HCT116 (cell line): ENCODE measurements at regions of chr17 and their contacts with region 1.

Region 1: GRCh38 chr17:75601057-75602051 is 13.8 kb downstream of the MYO15B start:
- DNase-seq: peak; percentile 96
- ATAC-seq: peak; percentile 89
- H3K4me3 ChIP-seq: peak overlapping the region in 1 of 2 experiments; percentile 30; a peak in 2 of 4 replicates
- H3K27ac ChIP-seq: peak overlapping the region; percentile 2; the same call in 1 of the 2 replicates
- H3K4me1 ChIP-seq: peaks cover 15 to 51% of the 10 kb centered on the region in 2 experiments
- H3K27me3 ChIP-seq: no peaks in the 10 kb centered on the region
- CTCF ChIP-seq: peak; percentile 95 to 100 (median 99); a peak in 5 of 6 replicates
- POLR2A ChIP-seq: no peak
- RAD21 ChIP-seq: peak; percentile 87

Region 2: DNA sequence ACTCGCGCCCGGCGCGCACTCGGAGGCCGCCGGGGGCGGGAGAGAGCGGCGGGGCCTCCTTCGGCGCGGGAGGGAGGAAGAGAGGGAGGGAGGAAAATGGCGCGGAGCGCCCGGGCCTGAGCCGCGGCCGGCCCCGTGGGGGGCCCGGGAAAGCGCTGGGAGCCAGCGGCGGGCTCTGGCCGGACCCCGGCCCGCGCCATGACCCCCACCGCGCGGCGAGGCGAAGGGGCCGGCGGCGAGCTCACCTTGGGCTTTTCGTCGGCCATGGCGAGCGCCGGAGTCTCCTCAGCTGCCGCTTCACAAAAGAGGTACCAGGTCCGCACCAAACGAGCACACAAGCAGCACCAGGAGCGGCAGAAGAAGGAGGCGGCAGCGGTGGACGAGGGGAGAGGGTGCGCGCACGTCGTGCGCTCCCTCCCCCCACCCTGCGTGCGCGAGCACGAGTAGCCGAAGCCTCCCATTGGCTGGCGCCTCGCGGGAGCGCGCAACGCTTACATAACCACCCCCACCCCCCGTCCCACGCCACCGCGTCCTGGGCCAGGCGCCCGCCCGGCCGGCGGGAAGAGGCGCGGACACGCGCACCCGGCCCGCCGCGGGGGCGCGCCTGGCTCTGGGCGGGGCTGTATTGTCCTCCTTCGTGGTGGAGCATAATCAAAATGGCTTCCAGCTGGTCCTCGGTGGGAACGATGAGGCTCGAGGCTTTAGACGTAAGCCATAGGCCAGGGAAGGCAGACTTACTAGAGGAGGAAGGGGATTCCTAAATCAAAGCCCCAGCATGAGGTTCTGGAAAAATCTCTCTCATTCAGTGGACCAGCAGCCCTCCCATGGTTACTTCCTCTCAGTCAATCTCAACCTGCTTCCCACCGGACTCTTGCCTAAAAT is 418.5 kb before region 1 on chr17 and contains the start of gene SUMO2:
- CTCF ChIA-PET with region 1: no interaction called
- POLR2A ChIA-PET with region 1: no interaction called
- RAD21 ChIA-PET with region 1: no interaction called
- intact Hi-C with region 1: no loop called
- DNase-seq: peak; percentile 95
- ATAC-seq: peak; percentile 87
- H3K4me3 ChIP-seq: peak within 1 kb of the TSS; percentile 76 to 89
- H3K27ac ChIP-seq: peak within 1 kb of the TSS; percentile 100
- H3K4me1 ChIP-seq: peaks cover 20 to 33% of the 10 kb centered on the region in 2 experiments
- H3K27me3 ChIP-seq: no peaks in the 10 kb centered on the region
- CTCF ChIP-seq: peak in 1 of 3 experiments; percentile 37; a peak in 2 of 6 replicates
- POLR2A ChIP-seq: peak; percentile 48
- RAD21 ChIP-seq: no peak
- total RNA-seq, gene SUMO2: 859 TPM

Region 3: GRCh38 chr17:75430159-75430974 is 171.0 kb before region 1 on chr17:
- CTCF ChIA-PET with region 1: interaction called, 5 read pairs
- POLR2A ChIA-PET with region 1: no interaction called
- RAD21 ChIA-PET with region 1: interaction called in 1 of 2 experiments, 3 read pairs
- intact Hi-C with region 1: loop called (anchors 5 kb)
- DNase-seq: no peak
- ATAC-seq: peak; percentile 66
- H3K4me3 ChIP-seq: peak overlapping the region in 1 of 2 experiments; percentile 43; a peak in 2 of 4 replicates
- H3K27ac ChIP-seq: peak overlapping the region; percentile 48; the same call in 1 of the 2 replicates
- H3K4me1 ChIP-seq: peaks cover 33 to 46% of the 10 kb centered on the region in 2 experiments
- H3K27me3 ChIP-seq: no peaks in the 10 kb centered on the region
- CTCF ChIP-seq: no peak
- POLR2A ChIP-seq: no peak
- RAD21 ChIP-seq: no peak

Region 4: GRCh38 chr17:75549221-75550138 is 51.9 kb before region 1 on chr17:
- CTCF ChIA-PET with region 1: interaction called, 11 read pairs
- POLR2A ChIA-PET with region 1: no interaction called
- RAD21 ChIA-PET with region 1: no interaction called
- intact Hi-C with region 1: no loop called
- DNase-seq: peak; percentile 63
- ATAC-seq: peak; percentile 94
- H3K4me3 ChIP-seq: peak overlapping the region; percentile 50 to 58
- H3K27ac ChIP-seq: peak overlapping the region; percentile 95
- H3K4me1 ChIP-seq: peaks cover 33 to 39% of the 10 kb centered on the region in 2 experiments
- H3K27me3 ChIP-seq: no peaks in the 10 kb centered on the region
- CTCF ChIP-seq: no peak
- POLR2A ChIP-seq: peak; percentile 76
- RAD21 ChIP-seq: no peak; the same call in 1 of the 2 replicates

Region 5: DNA sequence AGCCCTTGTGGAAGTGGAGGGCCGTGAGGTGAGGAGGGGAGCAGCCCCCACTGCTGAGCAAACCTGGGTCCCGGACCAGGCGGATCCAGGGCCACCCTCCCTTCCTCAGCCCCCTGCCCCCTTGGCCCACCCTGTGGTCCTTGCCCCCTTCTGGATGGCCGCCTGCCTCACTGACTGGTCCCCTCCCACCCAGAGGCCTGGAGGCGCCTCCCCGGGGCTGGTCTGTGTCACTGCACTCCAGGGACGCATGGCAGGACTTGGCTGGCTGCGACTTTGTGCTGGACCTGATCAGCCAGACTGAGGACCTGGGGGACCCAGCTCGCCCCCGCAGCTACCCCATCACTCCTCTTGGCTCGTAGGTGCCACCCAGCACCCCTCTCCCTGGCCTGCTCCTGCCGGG is 12.7 kb after region 1 on chr17:
- CTCF ChIA-PET with region 1: interaction called, 36 read pairs
- POLR2A ChIA-PET with region 1: interaction called, 5 read pairs
- RAD21 ChIA-PET with region 1: interaction called, 3 to 5 read pairs
- intact Hi-C with region 1: no loop called
- DNase-seq: no peak
- ATAC-seq: peak; percentile 77
- H3K4me3 ChIP-seq: no peak overlapping the region
- H3K27ac ChIP-seq: no peak overlapping the region
- H3K4me1 ChIP-seq: peaks cover 24 to 45% of the 10 kb centered on the region in 2 experiments
- H3K27me3 ChIP-seq: no peaks in the 10 kb centered on the region
- CTCF ChIP-seq: peak; percentile 65 to 91 (median 67); a peak in 5 of 6 replicates
- POLR2A ChIP-seq: no peak
- RAD21 ChIP-seq: peak; percentile 86

Region 6: DNA sequence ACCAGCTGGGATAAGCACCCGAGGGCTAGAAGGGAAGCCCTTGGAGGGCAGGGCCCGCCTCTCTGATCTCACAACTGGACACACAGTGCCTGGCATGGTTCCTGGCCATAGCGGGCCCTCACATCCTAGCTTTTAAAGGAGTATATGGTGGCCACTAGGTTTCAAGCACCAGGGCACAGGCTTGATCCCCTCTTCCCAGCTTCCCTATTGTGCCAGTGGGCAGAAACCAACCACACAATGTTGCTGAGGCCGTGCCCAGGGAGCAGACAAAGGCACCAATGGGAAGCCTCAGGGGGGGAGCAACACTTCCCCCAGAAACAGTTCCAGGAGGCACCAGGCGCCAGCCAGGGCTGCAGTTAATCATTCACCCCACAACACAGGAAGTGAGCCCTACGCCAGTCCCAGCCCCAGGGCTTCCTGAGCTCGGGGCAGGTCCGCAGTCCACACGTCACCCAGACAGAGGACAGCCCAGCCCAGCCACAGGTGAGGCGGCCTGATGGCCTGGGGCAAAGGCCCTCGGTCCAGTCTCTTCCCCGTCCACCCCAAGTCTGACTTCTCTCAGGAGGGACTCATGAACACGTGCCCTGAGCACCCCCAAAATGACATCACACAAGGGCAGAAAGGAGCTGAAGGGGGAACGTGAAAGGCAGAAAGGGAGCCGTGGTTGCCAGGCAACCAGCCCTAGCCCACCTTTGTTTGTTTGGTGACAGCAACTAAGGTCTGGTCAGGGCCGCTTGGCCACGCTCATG is 44.7 kb after region 1 on chr17:
- CTCF ChIA-PET with region 1: interaction called, 18 read pairs
- POLR2A ChIA-PET with region 1: no interaction called
- RAD21 ChIA-PET with region 1: no interaction called
- intact Hi-C with region 1: no loop called
- DNase-seq: peak; percentile 64
- ATAC-seq: peak; percentile 89
- H3K4me3 ChIP-seq: peak overlapping the region; percentile 8 to 55
- H3K27ac ChIP-seq: peak overlapping the region; percentile 77
- H3K4me1 ChIP-seq: peaks cover 34 to 60% of the 10 kb centered on the region in 2 experiments
- H3K27me3 ChIP-seq: no peaks in the 10 kb centered on the region
- CTCF ChIP-seq: no peak
- POLR2A ChIP-seq: no peak
- RAD21 ChIP-seq: no peak

Region 7: GRCh38 chr17:75764711-75765421 is 163.5 kb after region 1 on chr17 and contains the start of gene GALK1:
- CTCF ChIA-PET with region 1: interaction called, 15 read pairs
- POLR2A ChIA-PET with region 1: interaction called, 3 read pairs
- RAD21 ChIA-PET with region 1: no interaction called
- intact Hi-C with region 1: no loop called
- DNase-seq: no peak
- ATAC-seq: peak; percentile 85
- H3K4me3 ChIP-seq: peak within 1 kb of the TSS; percentile 84 to 91
- H3K27ac ChIP-seq: peak within 1 kb of the TSS; percentile 78
- H3K4me1 ChIP-seq: peaks cover 13 to 29% of the 10 kb centered on the region in 2 experiments
- H3K27me3 ChIP-seq: no peaks in the 10 kb centered on the region
- CTCF ChIP-seq: peak in 2 of 3 experiments; percentile 65 to 94; a peak in 4 of 6 replicates
- POLR2A ChIP-seq: no peak
- RAD21 ChIP-seq: peak; percentile 86
- total RNA-seq, gene GALK1: 57.8 TPM